ENCODE measurements at regions of chr13 and their contacts with region 1.

Region 1: GRCh38 chr13:36420437-36420891 is 11.8 kb upstream of the CCNA1 start:
- H3K4me3 Mint-ChIP-seq: no peak overlapping the region
- H3K27ac Mint-ChIP-seq: peak overlapping the region; percentile 66
- H3K4me1 Mint-ChIP-seq: peaks cover 40% of the 10 kb centered on the region
- H3K27me3 Mint-ChIP-seq: no peaks in the 10 kb centered on the region

Region 2: DNA sequence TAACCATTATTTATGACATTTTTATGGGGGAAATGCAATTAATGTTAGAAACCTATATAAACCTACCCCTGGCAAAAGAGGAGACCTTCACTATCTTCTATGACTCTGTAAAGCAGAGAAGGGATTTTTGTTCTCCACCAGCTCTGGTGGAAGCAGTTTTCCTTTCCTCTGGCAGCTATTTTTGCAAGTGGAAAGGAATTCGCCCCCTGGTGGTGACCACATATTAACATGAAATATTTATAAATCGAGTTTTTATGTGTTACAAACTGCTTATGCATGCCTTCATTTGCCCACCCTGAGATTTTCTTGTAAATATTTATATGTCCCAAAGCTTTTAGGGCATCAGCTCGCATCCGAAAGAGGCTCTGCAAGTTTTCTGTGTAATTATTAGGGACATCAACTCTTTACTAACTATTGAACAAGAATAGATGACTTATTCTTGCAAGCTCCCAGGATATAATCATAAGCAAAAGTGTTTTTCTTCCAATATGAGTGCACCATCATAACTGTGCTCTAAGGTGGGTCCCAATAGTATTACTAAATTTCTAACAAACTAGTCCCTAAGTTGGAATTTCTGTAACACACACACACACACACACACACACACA is 315.8 kb after region 1 on chr13:
- intact Hi-C with region 1: loop called (anchors 1 kb)
- H3K4me3 Mint-ChIP-seq: no peak overlapping the region
- H3K27ac Mint-ChIP-seq: no peak overlapping the region
- H3K4me1 Mint-ChIP-seq: no peaks in the 10 kb centered on the region
- H3K27me3 Mint-ChIP-seq: no peaks in the 10 kb centered on the region

Region 3: GRCh38 chr13:36981156-36981743 is 560.8 kb after region 1 on chr13:
- intact Hi-C with region 1: loop called (anchors 5 kb)
- H3K4me3 Mint-ChIP-seq: no peak overlapping the region
- H3K27ac Mint-ChIP-seq: no peak overlapping the region
- H3K4me1 Mint-ChIP-seq: peaks cover 5% of the 10 kb centered on the region
- H3K27me3 Mint-ChIP-seq: no peaks in the 10 kb centered on the region

Region 4: DNA sequence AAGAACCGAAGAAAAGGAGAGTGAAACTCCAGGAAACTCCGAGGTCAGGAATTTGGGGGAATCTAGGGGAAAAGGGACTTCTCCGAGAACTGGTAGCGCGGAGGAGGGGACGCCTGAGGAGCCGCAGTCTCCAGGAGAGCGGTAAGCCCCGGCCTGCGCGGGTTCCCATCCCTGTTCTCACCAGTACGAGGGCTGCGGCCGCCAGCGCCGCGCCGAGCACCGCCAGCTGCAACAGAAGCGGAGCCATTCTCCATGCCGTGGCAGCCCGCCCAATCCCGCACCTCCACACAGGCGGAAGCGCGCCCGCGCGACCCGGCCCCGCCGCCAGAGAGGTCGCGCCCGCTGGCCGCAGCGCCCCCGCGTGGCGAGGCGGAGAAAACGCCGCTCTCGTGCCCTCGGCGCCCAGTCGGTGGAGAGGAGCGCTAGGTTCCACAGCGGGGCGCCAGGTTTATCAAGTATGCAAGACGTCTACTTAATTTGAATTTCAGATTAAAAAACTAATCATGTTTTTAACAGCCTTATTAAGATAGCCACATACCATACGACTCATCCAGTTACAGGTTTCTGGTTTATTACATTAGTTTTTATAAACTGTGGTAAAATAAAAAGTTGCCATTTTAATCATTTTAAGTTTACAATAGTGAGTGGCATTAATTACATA is 578.7 kb after region 1 on chr13 and contains the start of gene ALG5:
- intact Hi-C with region 1: loop called (anchors 5 kb)
- H3K4me3 Mint-ChIP-seq: peak within 1 kb of the TSS; percentile 100
- H3K27ac Mint-ChIP-seq: peak within 1 kb of the TSS; percentile 99
- H3K4me1 Mint-ChIP-seq: peaks cover 24% of the 10 kb centered on the region
- H3K27me3 Mint-ChIP-seq: no peaks in the 10 kb centered on the region

Measured in dendritic cell treated with granulocyte-macrophage colony-stimulating factor and Interleukin-4, amounts not matched to agents 40 ng/mL and 50 ng/mL, for 4 days (primary cell).